Posterior vena cava (tissue), 2 donors: ENCODE measurements at regions of chr2 and their contacts with region 1.

Region 1: DNA sequence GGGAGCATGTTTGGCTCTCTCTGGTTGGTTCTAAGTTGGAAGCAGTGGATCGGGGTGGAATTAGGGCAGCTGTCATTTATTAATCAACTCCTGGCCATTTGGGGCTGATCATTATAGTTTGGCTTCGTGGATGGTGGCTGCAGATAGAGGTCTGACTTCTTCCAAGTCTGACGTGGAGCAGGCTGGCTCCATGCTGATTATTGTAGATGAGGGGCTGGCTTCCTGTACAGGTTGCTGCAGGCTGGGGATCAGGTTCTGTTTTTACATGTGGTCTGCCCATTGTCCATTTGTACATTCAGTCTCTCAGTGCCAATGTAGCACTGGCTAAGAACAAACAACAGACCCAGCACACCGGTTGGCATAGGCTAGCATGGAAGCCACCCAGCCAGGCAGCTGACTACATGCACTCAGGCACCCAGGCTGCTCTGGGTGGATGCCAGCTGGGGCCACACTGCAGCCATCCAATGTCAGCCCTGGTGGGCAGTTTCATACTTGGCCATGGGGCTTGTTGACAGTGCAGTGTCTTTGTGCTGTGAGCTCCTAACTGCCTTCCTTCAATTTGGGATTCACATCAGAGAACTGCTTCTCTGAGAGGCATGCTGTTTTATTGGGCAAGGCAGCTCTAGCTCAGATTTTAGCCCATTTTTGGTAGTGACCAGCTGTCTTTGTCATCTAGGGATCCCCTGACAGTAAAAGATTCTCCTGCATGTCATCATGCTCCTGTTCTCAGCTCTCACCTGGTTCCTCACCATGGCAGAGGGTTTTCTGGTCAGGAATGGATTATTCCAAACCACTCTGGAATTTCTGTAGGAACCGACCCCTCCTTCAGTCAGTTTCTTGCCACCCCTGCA is 25.4 kb downstream of the NPAS2 start:
- DNase-seq: no peak

Region 2: GRCh38 chr2:100818606-100819369 is 26.6 kb before region 1 on chr2:
- intact Hi-C with region 1: no loop called
- DNase-seq: peak; percentile 87

Region 3: GRCh38 chr2:102369866-102370265 is 1524.5 kb after region 1 on chr2:
- intact Hi-C with region 1: loop called in 1 of 2 experiments (anchors 5 kb)
- DNase-seq: no peak